ENCODE measurements at regions of chr18 and their contacts with region 1.

Region 1: DNA sequence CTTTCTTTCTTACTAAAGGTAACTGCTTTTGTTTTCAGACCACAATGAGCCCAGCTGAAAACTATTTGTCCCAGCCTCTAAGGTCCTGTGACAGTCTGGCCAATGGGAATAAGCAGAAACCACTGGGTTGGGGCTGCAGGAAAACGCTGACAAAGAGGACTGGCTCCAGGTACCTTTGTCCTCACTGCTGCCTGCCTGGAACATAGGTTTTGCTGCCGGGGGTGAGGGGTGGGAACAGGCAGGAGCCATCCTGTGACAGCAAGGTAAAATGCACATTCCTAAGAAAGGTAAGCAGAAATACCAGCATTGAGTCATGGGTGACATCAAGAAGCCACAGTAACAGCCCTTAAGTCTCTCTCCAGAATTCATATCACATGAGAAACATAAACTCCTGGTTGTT is 21.6 kb downstream of the PTPN2 start:
- DNase-seq: no peak
- ATAC-seq: no peak
- H3K4me3 ChIP-seq: no peak overlapping the region
- H3K27ac ChIP-seq: no peak overlapping the region
- H3K4me1 ChIP-seq: peaks cover 36% of the 10 kb centered on the region
- H3K27me3 ChIP-seq: no peaks in the 10 kb centered on the region
- CTCF ChIP-seq: no peak
- EP300 ChIP-seq: no peak
- POLR2A ChIP-seq: no peak
- RAD21 ChIP-seq: no peak

Region 2: DNA sequence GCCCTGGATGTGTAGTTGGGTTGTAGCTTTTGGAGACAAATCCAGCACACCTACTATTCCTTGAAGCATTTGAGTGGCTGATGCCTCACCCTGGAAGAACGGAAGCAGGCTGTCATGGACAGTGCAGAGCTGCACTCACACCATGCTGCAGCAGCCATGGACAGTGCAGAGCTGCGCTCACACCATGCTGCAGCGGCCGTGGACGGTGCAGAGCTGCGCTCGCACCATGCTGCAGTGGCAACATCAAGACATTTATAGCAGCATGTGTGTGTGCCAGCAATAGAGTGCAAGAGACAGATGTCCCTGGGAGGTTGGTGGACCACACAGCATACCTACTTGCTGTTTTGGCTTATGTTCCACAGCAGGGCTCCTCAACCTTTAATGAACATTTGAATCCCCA is 1142.8 kb before region 1 on chr18:
- CTCF ChIA-PET with region 1: no interaction called
- POLR2A ChIA-PET with region 1: no interaction called
- RAD21 ChIA-PET with region 1: no interaction called
- SMC1A ChIA-PET with region 1: no interaction called
- in situ Hi-C with region 1: no loop called
- intact Hi-C with region 1: no loop called
- DNase-seq: no peak
- ATAC-seq: no peak
- H3K4me3 ChIP-seq: no peak overlapping the region
- H3K27ac ChIP-seq: no peak overlapping the region
- H3K4me1 ChIP-seq: no peaks in the 10 kb centered on the region
- H3K27me3 ChIP-seq: no peaks in the 10 kb centered on the region
- CTCF ChIP-seq: no peak
- EP300 ChIP-seq: no peak
- POLR2A ChIP-seq: no peak
- RAD21 ChIP-seq: no peak

Region 3: GRCh38 chr18:12843420-12844350 is 18.8 kb before region 1 on chr18:
- CTCF ChIA-PET with region 1: interaction called, 3 read pairs
- POLR2A ChIA-PET with region 1: interaction called, 4 read pairs
- RAD21 ChIA-PET with region 1: interaction called, 7 read pairs
- SMC1A ChIA-PET with region 1: interaction called, 10 read pairs
- in situ Hi-C with region 1: no loop called
- intact Hi-C with region 1: no loop called
- DNase-seq: no peak
- ATAC-seq: peak; percentile 12; the same call in 2 of the 3 replicates
- H3K4me3 ChIP-seq: no peak overlapping the region
- H3K27ac ChIP-seq: peak overlapping the region; percentile 71
- H3K4me1 ChIP-seq: peaks cover 35% of the 10 kb centered on the region
- H3K27me3 ChIP-seq: no peaks in the 10 kb centered on the region
- CTCF ChIP-seq: no peak
- EP300 ChIP-seq: no peak
- POLR2A ChIP-seq: no peak
- RAD21 ChIP-seq: no peak

Region 4: DNA sequence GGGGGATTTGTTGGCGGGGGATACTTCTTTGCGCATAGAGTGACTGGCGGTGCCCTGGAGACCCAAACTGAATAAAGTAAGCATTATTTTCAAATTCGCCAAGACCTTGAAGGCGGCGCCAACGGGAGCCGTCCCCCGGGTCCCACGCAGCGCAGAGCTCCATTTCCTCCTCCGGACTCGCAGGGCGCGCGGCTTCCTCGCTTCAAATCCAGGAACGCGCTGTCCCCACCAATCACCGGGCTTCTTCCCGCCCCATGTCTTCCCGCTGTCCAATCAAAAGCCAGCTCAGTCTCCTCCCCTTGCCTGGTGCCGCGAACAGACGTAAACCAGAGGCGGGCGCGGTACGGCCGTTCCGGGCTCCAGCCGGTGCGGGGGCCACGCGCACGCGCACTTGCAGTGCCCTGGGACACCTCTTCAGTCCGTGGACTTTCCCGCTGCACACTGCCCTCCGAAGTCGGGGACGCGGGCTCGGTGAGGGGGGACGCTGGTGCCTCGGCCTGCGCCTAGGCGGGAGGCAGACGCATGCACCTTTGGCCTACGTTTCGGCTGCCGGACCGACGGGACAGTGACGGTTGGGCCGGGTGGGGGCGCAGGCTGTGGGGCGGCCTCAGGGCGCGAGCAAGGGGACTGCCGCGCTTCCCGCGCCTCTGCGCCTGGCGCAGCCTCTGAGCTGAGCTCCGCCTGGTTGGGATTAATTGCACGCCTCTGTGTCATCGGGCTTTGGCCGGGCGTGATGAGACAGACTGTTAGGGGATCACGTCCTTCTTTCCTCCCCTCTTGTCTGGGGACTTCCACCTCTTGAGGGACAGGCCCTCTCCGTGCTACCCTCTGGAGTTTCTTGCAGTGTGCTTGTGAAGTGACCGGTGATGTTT is 128.7 kb after region 1 on chr18 and contains the start of gene CEP192:
- CTCF ChIA-PET with region 1: no interaction called
- POLR2A ChIA-PET with region 1: no interaction called
- RAD21 ChIA-PET with region 1: no interaction called
- SMC1A ChIA-PET with region 1: no interaction called
- in situ Hi-C with region 1: no loop called
- intact Hi-C with region 1: no loop called
- DNase-seq: peak; percentile 96
- ATAC-seq: peak; percentile 91
- H3K4me3 ChIP-seq: peak within 1 kb of the TSS; percentile 76
- H3K27ac ChIP-seq: peak within 1 kb of the TSS; percentile 94
- H3K4me1 ChIP-seq: peaks cover 10% of the 10 kb centered on the region
- H3K27me3 ChIP-seq: no peaks in the 10 kb centered on the region
- CTCF ChIP-seq: no peak
- EP300 ChIP-seq: peak in 1 of 2 experiments; percentile 17; a peak in 1 of 4 replicates
- POLR2A ChIP-seq: peak; percentile 98
- RAD21 ChIP-seq: no peak
- polyA plus RNA-seq, gene CEP192: 15.4 to 24.5 TPM

Measured in GM12878 (cell line).